Calu3 (cell line): ENCODE measurements at regions of chr7 and their contacts with region 1.

Region 1: DNA sequence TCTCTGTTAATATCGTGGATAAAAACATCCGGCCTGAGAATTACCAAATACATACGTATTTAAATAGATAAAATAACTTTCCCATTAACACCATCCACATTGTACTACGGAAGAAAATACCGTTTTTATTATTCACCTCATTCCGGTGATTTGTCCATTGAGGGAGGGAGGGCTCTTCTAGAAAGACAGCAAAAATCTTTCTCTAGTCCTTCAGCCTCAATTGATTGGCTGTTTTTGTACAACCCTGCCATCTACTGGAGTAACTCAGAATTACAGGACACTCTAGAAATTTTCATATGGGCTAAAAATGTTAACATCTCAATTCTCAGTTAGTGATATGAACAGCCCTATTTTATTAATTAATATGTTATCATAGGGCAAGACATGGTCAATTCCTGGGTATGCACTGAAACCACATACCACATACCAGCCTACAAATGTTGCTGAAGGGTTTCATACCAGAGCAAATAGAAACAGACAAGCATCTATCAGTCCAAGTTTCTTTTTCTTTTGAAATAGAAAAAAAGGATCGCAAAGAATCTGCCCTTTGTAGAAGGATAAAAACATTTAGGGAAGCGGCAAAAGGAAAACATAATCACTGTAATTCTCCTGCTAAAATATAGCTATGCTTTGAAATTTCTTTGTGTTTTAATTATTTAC is 55.8 kb upstream of the CDCA7L start:
- DNase-seq: peak; percentile 69
- H3K4me3 Mint-ChIP-seq: no peak overlapping the region
- H3K27ac Mint-ChIP-seq: no peak overlapping the region
- H3K4me1 Mint-ChIP-seq: peaks cover 5% of the 10 kb centered on the region
- H3K27me3 Mint-ChIP-seq: peaks cover 33% of the 10 kb centered on the region
- CTCF ChIP-seq: peak; percentile 83

Region 2: GRCh38 chr7:20778063-20778721 is 1223.3 kb before region 1 on chr7:
- CTCF ChIA-PET with region 1: no interaction called
- intact Hi-C with region 1: loop called (anchors 5 kb)
- DNase-seq: peak; percentile 79
- H3K4me3 Mint-ChIP-seq: peak overlapping the region; percentile 71
- H3K27ac Mint-ChIP-seq: no peak overlapping the region
- H3K4me1 Mint-ChIP-seq: peaks cover 14% of the 10 kb centered on the region
- H3K27me3 Mint-ChIP-seq: peaks cover 79% of the 10 kb centered on the region
- CTCF ChIP-seq: peak; percentile 97

Region 3: GRCh38 chr7:21568762-21569161 is 432.7 kb before region 1 on chr7:
- CTCF ChIA-PET with region 1: no interaction called
- intact Hi-C with region 1: loop called (anchors 5 kb)
- DNase-seq: peak; percentile 24
- H3K4me3 Mint-ChIP-seq: no peak overlapping the region
- H3K27ac Mint-ChIP-seq: no peak overlapping the region
- H3K4me1 Mint-ChIP-seq: peaks cover 11% of the 10 kb centered on the region
- H3K27me3 Mint-ChIP-seq: no peaks in the 10 kb centered on the region
- CTCF ChIP-seq: no peak

Region 4: DNA sequence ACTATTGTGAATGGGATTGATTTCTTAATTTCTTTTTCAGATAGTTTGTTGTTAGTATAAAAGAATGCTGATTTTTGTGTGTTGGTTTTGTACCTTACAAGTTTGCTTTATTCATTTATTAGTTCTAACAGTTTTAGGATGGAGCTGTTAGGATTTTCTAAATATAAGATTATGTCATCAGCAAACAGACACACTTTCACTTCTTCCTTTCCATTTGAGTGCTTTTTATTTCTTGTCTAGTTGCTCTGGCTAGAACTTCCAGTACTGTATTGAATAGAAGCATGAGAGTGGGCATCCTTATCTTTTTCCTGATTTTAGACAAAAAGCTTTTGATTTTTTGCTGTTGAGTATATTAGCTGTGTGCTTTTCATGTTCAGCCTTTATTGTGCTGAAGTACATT is 377.2 kb before region 1 on chr7:
- CTCF ChIA-PET with region 1: no interaction called
- intact Hi-C with region 1: no loop called
- DNase-seq: no peak
- H3K4me3 Mint-ChIP-seq: no peak overlapping the region
- H3K27ac Mint-ChIP-seq: no peak overlapping the region
- H3K4me1 Mint-ChIP-seq: peaks cover 18% of the 10 kb centered on the region
- H3K27me3 Mint-ChIP-seq: no peaks in the 10 kb centered on the region
- CTCF ChIP-seq: no peak

Region 5: GRCh38 chr7:21923658-21924057 is 77.8 kb before region 1 on chr7:
- CTCF ChIA-PET with region 1: interaction called, 5 read pairs
- intact Hi-C with region 1: loop called (anchors 5 kb)
- DNase-seq: no peak
- H3K4me3 Mint-ChIP-seq: no peak overlapping the region
- H3K27ac Mint-ChIP-seq: no peak overlapping the region
- H3K4me1 Mint-ChIP-seq: no peaks in the 10 kb centered on the region
- H3K27me3 Mint-ChIP-seq: no peaks in the 10 kb centered on the region
- CTCF ChIP-seq: no peak

Region 6: DNA sequence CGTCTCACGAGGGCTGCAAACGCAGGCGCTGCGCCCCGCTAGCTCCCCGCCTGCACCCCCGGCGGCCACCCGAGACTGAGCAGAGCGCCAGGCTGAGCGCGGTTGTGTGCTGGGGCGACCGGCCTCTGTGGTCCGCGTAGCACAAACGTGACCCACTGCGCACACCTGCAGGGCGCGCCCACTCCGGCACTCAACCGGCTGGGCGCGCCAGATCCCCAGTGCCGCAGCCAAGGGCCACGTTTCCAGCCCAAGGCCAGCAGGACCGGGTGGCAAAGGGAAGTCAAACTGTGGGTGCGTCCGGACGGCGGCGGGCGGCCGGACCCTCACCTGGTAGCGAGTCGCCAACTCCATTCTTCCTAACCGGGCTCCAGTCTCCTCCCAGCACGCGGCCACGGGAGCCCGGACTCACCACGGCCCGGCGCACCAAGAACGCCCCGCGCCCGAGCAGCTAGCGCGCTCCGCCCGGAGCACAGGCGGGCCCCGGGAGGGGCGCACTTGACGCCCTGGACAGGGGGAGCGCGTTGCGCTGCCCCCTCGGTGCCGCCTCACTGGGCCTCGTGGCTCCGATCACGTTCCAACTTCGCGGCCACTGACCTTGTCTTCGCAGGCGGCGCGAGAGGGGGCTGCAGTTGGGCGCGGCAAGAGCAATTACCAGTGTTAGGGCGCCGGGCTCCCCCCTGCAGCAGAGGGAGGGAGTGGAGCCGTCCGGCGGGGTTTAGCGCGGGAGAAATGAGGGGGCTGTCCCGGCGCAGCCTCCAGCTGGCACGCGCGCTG is 55.8 kb before region 1 on chr7 and contains the start of gene CDCA7L:
- CTCF ChIA-PET with region 1: interaction called, 9 read pairs
- intact Hi-C with region 1: loop called (anchors 1 kb)
- DNase-seq: peak; percentile 88
- H3K4me3 Mint-ChIP-seq: peak within 1 kb of the TSS; percentile 95
- H3K27ac Mint-ChIP-seq: peak within 1 kb of the TSS; percentile 97
- H3K4me1 Mint-ChIP-seq: peaks cover 33% of the 10 kb centered on the region
- H3K27me3 Mint-ChIP-seq: peaks cover 11% of the 10 kb centered on the region
- CTCF ChIP-seq: peak; percentile 31
- total RNA-seq, gene CDCA7L: 71.8 and 76.3 TPM in 2 replicates

Region 7: DNA sequence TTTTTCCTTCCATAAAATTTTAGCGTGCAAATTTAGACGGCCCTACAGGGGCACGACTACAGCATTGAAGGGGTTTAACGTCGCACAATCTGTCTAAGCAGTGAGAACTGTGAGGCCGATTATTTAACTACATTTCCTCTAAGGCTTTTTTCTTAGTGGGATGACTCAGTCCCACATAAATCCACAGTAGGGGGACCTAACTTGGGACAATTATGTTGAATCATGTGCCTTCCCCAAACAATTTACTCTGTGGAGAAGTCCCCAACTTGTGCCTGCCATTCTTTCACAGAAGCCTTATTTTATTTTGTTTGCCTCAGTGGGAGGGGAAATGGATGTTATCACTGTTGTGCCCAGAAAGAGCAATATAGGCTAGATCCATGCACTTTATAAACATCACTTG is 24.5 kb after region 1 on chr7:
- CTCF ChIA-PET with region 1: no interaction called
- intact Hi-C with region 1: no loop called
- DNase-seq: no peak
- H3K4me3 Mint-ChIP-seq: no peak overlapping the region
- H3K27ac Mint-ChIP-seq: no peak overlapping the region
- H3K4me1 Mint-ChIP-seq: no peaks in the 10 kb centered on the region
- H3K27me3 Mint-ChIP-seq: peaks cover 51% of the 10 kb centered on the region
- CTCF ChIP-seq: no peak

Region 8: GRCh38 chr7:22499044-22499443 is 497.6 kb after region 1 on chr7:
- CTCF ChIA-PET with region 1: no interaction called
- intact Hi-C with region 1: loop called (anchors 5 kb)
- DNase-seq: no peak
- H3K4me3 Mint-ChIP-seq: peak overlapping the region; percentile 71
- H3K27ac Mint-ChIP-seq: no peak overlapping the region
- H3K4me1 Mint-ChIP-seq: peaks cover 22% of the 10 kb centered on the region
- H3K27me3 Mint-ChIP-seq: peaks cover 13% of the 10 kb centered on the region
- CTCF ChIP-seq: no peak